Activated naive CD4-positive, alpha-beta T cell treated with anti-CD3 and anti-CD28 coated beads, Interleukin-2, amount 10 ng/mL, durations not matched to agents 7 days and 5 days (primary cell): ENCODE measurements at regions of chr21 and their contacts with region 1.

Region 1: GRCh38 chr21:44510508-44511210 is 29.3 kb downstream of the KRTAP10-1 start:
- DNase-seq: peak; percentile 85
- H3K4me3 Mint-ChIP-seq: peak overlapping the region; percentile 31
- H3K27ac Mint-ChIP-seq: no peak overlapping the region
- H3K4me1 Mint-ChIP-seq: peaks cover 2% of the 10 kb centered on the region
- H3K27me3 Mint-ChIP-seq: peaks cover 24% of the 10 kb centered on the region

Region 2: DNA sequence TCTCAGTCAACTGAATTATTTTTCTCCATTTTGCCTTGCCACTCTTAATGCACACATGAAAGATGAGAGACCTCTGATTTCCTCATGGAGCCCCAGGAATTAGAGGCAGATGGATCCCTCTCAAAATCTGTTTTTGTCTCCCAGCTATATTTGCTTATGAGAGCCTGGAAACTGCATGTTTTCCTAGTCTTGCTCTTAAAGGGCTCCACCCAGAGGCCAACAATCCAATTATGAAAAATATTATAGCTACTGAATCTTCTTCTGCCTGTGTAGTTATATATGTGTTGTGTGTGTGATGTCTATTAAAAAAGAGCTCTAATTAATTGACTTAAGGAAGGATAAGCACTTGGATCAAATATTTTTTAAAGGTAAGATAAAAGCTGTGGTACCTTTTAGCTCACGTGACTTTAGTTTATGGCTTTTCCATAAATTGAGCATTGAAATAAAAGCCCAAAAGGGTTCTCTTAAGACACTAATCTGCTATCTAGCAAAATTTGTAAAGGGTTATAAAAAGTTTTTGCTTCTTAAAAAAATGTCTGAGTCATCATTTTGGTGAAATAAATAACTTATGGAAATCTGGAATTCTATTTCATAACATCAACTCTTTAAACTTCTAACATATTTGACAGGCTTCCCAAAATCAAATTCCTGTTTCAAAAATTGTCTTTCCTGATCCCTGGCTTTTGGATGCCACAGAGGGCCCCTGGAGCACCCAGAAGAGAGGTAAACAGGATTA is 231.9 kb after region 1 on chr21:
- CTCF ChIA-PET with region 1: interaction called, 50 read pairs
- DNase-seq: no peak
- H3K4me3 Mint-ChIP-seq: no peak overlapping the region
- H3K27ac Mint-ChIP-seq: no peak overlapping the region
- H3K4me1 Mint-ChIP-seq: peaks cover 3% of the 10 kb centered on the region
- H3K27me3 Mint-ChIP-seq: peaks cover 36% of the 10 kb centered on the region

Region 3: GRCh38 chr21:44792702-44793591 is 282.3 kb after region 1 on chr21:
- CTCF ChIA-PET with region 1: interaction called, 65 read pairs
- DNase-seq: peak; percentile 62
- H3K4me3 Mint-ChIP-seq: no peak overlapping the region
- H3K27ac Mint-ChIP-seq: peak overlapping the region; percentile 7
- H3K4me1 Mint-ChIP-seq: peaks cover 29% of the 10 kb centered on the region
- H3K27me3 Mint-ChIP-seq: no peaks in the 10 kb centered on the region